ENCODE measurements at regions of chr6 and their contacts with region 1.

Region 1: GRCh38 chr6:169723200-169723909 is 945 bp downstream of the PHF10 start:
- DNase-seq: peak in 1 of 2 donors; percentile 88
- H3K4me3 ChIP-seq: peak overlapping the region; percentile 88 to 99
- H3K27ac ChIP-seq: peak overlapping the region; percentile 88 to 98
- H3K4me1 ChIP-seq: peaks cover 4 to 14% of the 10 kb centered on the region in 2 donors
- H3K27me3 ChIP-seq: no peaks in the 10 kb centered on the region
- CTCF ChIP-seq: no peak

Region 2: GRCh38 chr6:169701954-169702839 is 21.2 kb before region 1 on chr6 and contains the starts of genes C6orf120 and WDR27:
- intact Hi-C with region 1: loop called (anchors 1 kb)
- DNase-seq: peak; percentile 91 to 98
- H3K4me3 ChIP-seq: peak within 1 kb of the TSS; percentile 70 to 83
- H3K27ac ChIP-seq: peak within 1 kb of the TSS; percentile 91 to 99
- H3K4me1 ChIP-seq: peaks cover 0 to 16% of the 10 kb centered on the region in 2 donors
- H3K27me3 ChIP-seq: no peaks in the 10 kb centered on the region
- CTCF ChIP-seq: no peak
- total RNA-seq, gene C6orf120: 36.2 TPM
- total RNA-seq, gene WDR27: 92.7 TPM

Region 3: GRCh38 chr6:169751242-169752073 is 28.1 kb after region 1 on chr6 and contains the starts of genes DYNLT2 and ERMARD:
- intact Hi-C with region 1: loop called (anchors 1 kb)
- DNase-seq: peak; percentile 78 to 96
- H3K4me3 ChIP-seq: peak within 1 kb of the TSS; percentile 91
- H3K27ac ChIP-seq: peak within 1 kb of the TSS; percentile 97 to 98
- H3K4me1 ChIP-seq: peaks cover 2 to 13% of the 10 kb centered on the region in 2 donors
- H3K27me3 ChIP-seq: no peaks in the 10 kb centered on the region
- CTCF ChIP-seq: peak; percentile 3 to 27 (median 3)
- total RNA-seq, gene DYNLT2: 0.21 TPM
- total RNA-seq, gene ERMARD: 4.0 TPM